Activated CD4-positive, alpha-beta memory T cell treated with anti-CD3 and anti-CD28 coated beads for 36 hours (primary cell): ENCODE measurements at regions of chr11 and their contacts with region 1.

Region 1: DNA sequence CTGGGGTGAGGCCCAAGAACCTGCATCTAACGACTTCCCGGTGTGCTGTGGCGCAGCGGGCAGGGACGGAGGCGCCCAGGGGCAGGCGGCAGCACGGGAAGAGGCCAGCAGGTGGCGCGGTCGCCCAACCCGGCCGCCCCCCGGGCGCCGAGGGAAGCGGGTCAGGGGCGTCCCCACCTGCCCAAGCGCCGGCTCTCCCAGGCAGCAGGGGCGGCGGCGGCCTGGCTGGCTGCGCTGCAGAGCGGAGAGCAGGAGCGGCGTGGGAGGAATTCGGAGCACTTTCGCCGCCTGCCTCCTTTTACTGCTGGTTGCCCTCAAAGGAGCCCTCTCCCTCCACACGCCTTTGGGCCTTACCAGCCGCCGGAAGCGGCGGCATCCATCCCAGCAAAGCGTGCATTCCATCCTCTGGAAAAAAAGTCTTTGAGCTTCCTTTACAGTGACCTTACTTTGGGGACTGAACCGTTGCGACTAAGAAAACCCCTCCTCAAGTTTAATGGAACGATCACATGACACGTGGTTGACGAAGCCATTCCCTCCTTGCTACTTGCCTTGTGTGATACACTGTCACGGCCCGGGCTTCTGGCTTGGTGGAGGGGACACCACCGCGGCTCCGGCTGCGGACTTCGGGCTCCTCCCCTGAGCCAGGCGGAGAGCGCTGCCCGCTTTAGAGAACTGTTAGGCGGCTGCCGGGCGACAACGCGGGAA is 106.8 kb upstream of the CLMP start:
- DNase-seq: peak; percentile 86
- H3K4me3 Mint-ChIP-seq: peak overlapping the region; percentile 53
- H3K27ac Mint-ChIP-seq: peak overlapping the region; percentile 84
- H3K4me1 Mint-ChIP-seq: peaks cover 41% of the 10 kb centered on the region
- H3K27me3 Mint-ChIP-seq: no peaks in the 10 kb centered on the region

Region 2: GRCh38 chr11:123282597-123282996 is 19.3 kb before region 1 on chr11:
- CTCF ChIA-PET with region 1: no interaction called
- POLR2A ChIA-PET with region 1: no interaction called
- intact Hi-C with region 1: no loop called
- DNase-seq: no peak
- H3K4me3 Mint-ChIP-seq: no peak overlapping the region
- H3K27ac Mint-ChIP-seq: no peak overlapping the region
- H3K4me1 Mint-ChIP-seq: no peaks in the 10 kb centered on the region
- H3K27me3 Mint-ChIP-seq: peaks cover 25% of the 10 kb centered on the region

Region 3: DNA sequence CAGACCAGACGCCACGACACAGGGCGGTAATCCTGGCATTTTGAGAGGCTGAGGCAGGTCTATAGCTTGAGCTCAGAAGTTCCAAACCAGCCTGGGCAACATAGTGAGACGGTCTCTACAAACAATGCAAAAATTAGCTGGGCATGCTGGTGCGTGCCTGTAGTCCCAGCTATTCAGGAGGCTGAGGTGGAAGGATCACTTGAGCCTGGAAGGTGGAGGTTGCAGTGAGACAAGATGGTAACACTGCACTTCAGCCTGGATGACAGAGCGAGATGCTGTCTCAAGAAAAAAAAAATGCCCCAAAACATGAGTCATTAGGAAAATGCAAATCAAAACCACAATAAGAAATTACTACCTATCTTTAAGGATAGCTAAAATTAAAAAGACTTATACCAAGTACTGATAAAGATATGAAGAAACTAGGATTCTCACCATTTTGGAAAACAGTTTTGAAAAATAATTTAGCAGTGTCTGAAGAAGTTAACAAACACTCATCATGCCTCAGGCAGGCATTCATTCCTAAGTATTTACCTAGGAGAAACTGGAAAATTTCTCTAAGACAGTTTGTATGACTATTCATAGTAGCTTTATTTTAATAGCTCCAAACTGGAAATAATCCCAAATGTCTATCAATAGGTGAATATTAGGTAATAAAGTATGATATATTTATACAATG is 36.6 kb after region 1 on chr11:
- CTCF ChIA-PET with region 1: interaction called, 4 read pairs
- POLR2A ChIA-PET with region 1: no interaction called
- intact Hi-C with region 1: loop called (anchors 1 kb)
- DNase-seq: no peak
- H3K4me3 Mint-ChIP-seq: no peak overlapping the region
- H3K27ac Mint-ChIP-seq: no peak overlapping the region
- H3K4me1 Mint-ChIP-seq: peaks cover 9% of the 10 kb centered on the region
- H3K27me3 Mint-ChIP-seq: peaks cover 11% of the 10 kb centered on the region

Region 4: GRCh38 chr11:123373754-123374621 is 72.1 kb after region 1 on chr11:
- CTCF ChIA-PET with region 1: interaction called, 3 read pairs
- POLR2A ChIA-PET with region 1: no interaction called
- intact Hi-C with region 1: loop called (anchors 1 kb)
- DNase-seq: no peak
- H3K4me3 Mint-ChIP-seq: no peak overlapping the region
- H3K27ac Mint-ChIP-seq: no peak overlapping the region
- H3K4me1 Mint-ChIP-seq: peaks cover 25% of the 10 kb centered on the region
- H3K27me3 Mint-ChIP-seq: peaks cover 3% of the 10 kb centered on the region

Region 5: DNA sequence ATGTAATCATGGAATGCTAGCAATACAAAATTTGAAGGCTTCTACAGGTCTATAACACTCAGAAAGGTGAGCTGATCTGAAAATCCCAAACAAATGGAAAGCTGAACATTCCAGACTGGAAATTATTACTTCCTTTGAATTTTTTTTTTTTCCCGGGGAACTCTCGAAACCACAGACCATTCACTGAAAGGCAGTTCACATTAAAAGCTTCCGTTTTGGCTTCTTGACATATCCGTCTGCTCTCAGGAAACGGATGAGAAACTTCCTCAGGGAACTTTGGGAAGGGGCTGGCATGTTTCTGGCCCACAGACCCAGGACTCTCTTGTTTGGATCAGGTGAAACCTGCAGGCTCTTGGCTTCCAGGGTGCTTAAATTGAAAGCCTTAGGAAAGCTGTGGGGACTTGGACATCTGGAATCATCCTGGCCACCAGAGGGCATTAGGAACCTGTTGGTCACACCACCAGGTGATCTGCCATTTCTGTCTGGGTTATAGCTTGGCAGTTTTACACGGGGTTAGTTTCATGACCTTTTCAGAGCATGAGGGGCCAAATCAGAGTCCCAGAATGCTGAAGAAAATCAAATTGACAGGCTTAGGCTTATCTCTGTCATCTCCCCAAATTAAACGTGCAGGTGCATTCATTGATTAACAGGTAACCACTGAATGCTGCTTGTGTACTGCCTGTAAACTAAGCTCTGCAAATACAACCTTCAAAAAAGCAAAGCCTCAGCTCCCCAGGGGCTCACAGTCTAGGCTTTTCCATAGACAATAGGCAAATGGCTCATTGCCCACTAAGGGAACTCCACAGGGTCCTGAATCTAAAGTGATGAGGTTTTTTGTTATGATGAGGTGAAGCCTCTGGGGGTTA is 105.5 kb after region 1 on chr11:
- CTCF ChIA-PET with region 1: interaction called, 59 read pairs
- POLR2A ChIA-PET with region 1: no interaction called
- intact Hi-C with region 1: loop called (anchors 1 kb)
- DNase-seq: peak; percentile 72
- H3K4me3 Mint-ChIP-seq: peak overlapping the region; percentile 55
- H3K27ac Mint-ChIP-seq: peak overlapping the region; percentile 65
- H3K4me1 Mint-ChIP-seq: peaks cover 33% of the 10 kb centered on the region
- H3K27me3 Mint-ChIP-seq: peaks cover 6% of the 10 kb centered on the region

Region 6: GRCh38 chr11:123454060-123454651 is 152.3 kb after region 1 on chr11:
- CTCF ChIA-PET with region 1: interaction called, 5 read pairs
- POLR2A ChIA-PET with region 1: no interaction called
- intact Hi-C with region 1: loop called (anchors 1 kb)
- DNase-seq: peak; percentile 92
- H3K4me3 Mint-ChIP-seq: peak overlapping the region; percentile 74
- H3K27ac Mint-ChIP-seq: peak overlapping the region; percentile 97
- H3K4me1 Mint-ChIP-seq: peaks cover 82% of the 10 kb centered on the region
- H3K27me3 Mint-ChIP-seq: no peaks in the 10 kb centered on the region

Region 7: GRCh38 chr11:123560006-123560405 is 258.2 kb after region 1 on chr11:
- CTCF ChIA-PET with region 1: interaction called, 5 read pairs
- POLR2A ChIA-PET with region 1: no interaction called
- intact Hi-C with region 1: loop called (anchors 1 kb)
- DNase-seq: peak; percentile 25
- H3K4me3 Mint-ChIP-seq: no peak overlapping the region
- H3K27ac Mint-ChIP-seq: no peak overlapping the region
- H3K4me1 Mint-ChIP-seq: peaks cover 9% of the 10 kb centered on the region
- H3K27me3 Mint-ChIP-seq: no peaks in the 10 kb centered on the region